ENCODE measurements at regions of chr18 and their contacts with region 1.

Region 1: DNA sequence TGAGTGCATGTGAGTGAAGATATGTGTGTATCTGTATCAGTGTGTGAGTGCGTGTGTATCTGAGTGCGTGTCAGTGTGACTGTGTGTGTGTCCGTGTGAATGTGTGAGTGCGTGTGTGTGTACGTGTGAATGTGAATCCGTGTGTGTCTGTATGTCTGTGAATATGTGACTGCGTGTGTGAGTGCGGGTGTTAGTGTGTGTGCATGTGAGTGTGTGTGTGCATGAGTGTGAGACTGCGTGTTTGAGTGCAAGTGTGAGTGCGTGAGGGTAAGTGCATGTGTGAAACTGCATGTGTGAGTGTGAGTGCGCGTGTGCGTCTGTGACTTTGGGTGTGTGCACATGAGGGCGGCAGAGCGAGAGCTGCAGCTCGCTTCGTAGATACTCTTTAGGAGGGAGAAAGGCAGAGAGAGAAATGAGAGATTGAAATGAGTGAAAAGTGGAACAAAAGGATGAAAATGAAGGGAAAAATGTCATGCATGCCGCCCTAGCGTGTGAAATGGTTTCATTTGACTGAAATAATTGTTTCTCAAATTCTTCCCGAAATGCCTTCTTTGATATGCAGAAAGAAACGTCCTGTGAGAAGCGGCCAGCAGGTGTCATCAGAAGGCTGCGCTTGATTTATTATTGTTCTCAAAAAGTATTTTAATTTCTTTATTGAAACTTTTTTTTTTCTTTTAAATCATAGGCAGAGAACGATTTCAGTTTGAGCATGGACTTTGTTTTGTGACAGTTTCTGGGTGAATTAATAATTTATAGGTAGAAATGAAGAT is 25.6 kb downstream of the ZNF407 start:
- DNase-seq: peak in 4 of 10 donors; percentile 15 to 56 (median 45)
- H3K4me3 ChIP-seq: peak overlapping the region in 31 of 59 donors; percentile 1 to 55 (median 29)
- H3K27ac ChIP-seq: no peak overlapping the region
- H3K27me3 ChIP-seq: no peaks in the 10 kb centered on the region
- CTCF ChIP-seq: peak; percentile 45 to 76 (median 62)

Region 2: GRCh38 chr18:74682991-74683297 is 59.7 kb after region 1 on chr18:
- intact Hi-C with region 1: no loop called
- DNase-seq: no peak
- H3K4me3 ChIP-seq: no peak overlapping the region
- H3K27ac ChIP-seq: no peak overlapping the region
- H3K27me3 ChIP-seq: no peaks in the 10 kb centered on the region
- CTCF ChIP-seq: no peak

Region 3: GRCh38 chr18:76274468-76275289 is 1651.4 kb after region 1 on chr18:
- intact Hi-C with region 1: loop called in 1 of 2 experiments (anchors 10 kb)
- DNase-seq: peak; percentile 9 to 79 (median 68)
- H3K4me3 ChIP-seq: no peak overlapping the region
- H3K27ac ChIP-seq: no peak overlapping the region
- H3K27me3 ChIP-seq: no peaks in the 10 kb centered on the region
- CTCF ChIP-seq: peak in 54 of 56 donors; percentile 28 to 72 (median 54)

Region 4: DNA sequence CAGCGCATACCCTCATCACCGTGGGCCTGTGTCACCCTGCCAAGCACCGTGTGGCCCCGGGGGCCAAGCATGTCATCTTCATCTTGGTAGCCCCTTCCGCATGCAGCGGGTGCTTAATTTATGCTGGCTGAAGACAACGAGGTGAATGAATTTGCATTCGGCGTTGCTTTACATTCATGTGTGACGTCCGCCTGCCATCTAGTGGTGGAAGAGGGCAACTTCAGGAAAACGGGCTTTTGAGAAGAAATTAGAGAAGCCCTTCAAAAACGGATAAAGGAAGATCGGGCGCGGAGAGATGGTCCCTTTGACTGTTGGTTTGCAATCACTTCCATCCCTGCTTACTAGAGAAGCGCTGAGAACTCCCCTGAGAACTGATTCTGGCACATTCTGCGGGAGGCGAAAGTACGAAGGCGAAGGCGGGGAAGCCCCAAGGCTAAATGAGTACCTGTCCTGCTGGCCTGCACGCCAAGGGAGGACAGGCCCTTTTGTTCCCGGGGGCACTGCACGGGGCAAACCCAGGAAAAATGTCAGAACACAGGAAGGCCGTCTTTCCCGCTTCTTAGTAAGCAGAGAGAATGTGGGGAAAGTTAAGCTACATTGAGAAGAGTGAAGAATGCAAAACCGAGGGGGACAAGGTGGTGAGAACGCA is 1726.0 kb after region 1 on chr18:
- intact Hi-C with region 1: loop called in 1 of 2 experiments (anchors 2 kb)
- DNase-seq: peak in 7 of 10 donors; percentile 48 to 87 (median 76)
- H3K4me3 ChIP-seq: peak overlapping the region in 52 of 59 donors; percentile 6 to 64 (median 42)
- H3K27ac ChIP-seq: peak overlapping the region in 1 of 59 donors; percentile 55
- H3K27me3 ChIP-seq: no peaks in the 10 kb centered on the region
- CTCF ChIP-seq: peak; percentile 80 to 98 (median 86)

Measured in dorsolateral prefrontal cortex (tissue), 120 donors.